AG04449 (cell line): ENCODE measurements at regions of chr7 and their contacts with region 1.

Region 1: GRCh38 chr7:128209229-128210035 is 31.6 kb upstream of the LEP start:
- DNase-seq: no peak
- H3K4me3 ChIP-seq: no peak overlapping the region
- CTCF ChIP-seq: peak; percentile 97

Region 2: GRCh38 chr7:127588019-127588696 is 621.3 kb before region 1 on chr7 and contains the start of gene ARF5:
- CTCF ChIA-PET with region 1: interaction called, 12 read pairs
- POLR2A ChIA-PET with region 1: no interaction called
- DNase-seq: no peak
- H3K4me3 ChIP-seq: peak within 1 kb of the TSS; percentile 94
- CTCF ChIP-seq: no peak

Region 3: DNA sequence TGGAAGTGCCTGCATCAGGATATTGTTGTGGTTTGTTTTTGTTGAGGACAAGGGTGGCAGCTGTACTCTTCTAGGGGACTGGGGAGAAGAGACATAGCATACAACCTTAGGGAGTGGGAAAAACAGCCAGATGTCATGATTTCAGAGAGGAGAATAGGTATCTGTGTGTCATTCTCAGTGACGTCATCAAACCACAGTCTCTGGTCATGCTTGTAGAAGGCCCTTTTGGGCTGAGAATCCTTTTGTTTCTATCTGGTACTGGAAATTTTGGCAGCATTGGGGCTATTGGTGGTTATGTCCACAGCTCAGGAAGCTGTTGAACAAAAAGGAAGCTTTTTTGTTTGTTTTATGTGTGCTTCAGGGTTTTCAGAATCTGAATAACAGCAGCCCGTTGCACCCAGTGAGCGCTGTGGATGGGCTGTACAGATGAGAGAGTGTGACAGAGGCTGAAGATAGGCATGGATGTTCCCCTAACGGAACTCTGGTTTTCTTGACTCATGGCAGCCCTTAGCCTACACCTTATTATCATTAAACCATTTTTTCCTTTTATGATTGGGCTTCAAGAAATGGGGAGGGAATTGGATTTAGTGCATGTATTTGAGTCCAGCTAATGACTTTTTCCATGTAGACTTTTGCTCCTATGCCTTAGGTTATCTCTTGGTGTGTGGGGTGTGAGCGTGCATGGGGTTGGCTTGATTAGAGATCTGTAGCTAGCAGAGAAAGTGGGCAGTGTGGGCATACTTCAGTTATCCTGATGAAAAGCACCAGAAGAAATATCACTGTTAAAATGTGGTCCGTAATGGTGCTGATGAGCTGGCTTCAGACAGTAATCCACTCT is 491.7 kb before region 1 on chr7:
- CTCF ChIA-PET with region 1: interaction called, 223 read pairs
- POLR2A ChIA-PET with region 1: interaction called, 3 read pairs
- DNase-seq: no peak
- H3K4me3 ChIP-seq: no peak overlapping the region
- CTCF ChIP-seq: no peak

Region 4: GRCh38 chr7:128060018-128060417 is 149.4 kb before region 1 on chr7:
- CTCF ChIA-PET with region 1: interaction called, 13 read pairs
- POLR2A ChIA-PET with region 1: no interaction called
- DNase-seq: no peak
- H3K4me3 ChIP-seq: no peak overlapping the region
- CTCF ChIP-seq: no peak

Region 5: DNA sequence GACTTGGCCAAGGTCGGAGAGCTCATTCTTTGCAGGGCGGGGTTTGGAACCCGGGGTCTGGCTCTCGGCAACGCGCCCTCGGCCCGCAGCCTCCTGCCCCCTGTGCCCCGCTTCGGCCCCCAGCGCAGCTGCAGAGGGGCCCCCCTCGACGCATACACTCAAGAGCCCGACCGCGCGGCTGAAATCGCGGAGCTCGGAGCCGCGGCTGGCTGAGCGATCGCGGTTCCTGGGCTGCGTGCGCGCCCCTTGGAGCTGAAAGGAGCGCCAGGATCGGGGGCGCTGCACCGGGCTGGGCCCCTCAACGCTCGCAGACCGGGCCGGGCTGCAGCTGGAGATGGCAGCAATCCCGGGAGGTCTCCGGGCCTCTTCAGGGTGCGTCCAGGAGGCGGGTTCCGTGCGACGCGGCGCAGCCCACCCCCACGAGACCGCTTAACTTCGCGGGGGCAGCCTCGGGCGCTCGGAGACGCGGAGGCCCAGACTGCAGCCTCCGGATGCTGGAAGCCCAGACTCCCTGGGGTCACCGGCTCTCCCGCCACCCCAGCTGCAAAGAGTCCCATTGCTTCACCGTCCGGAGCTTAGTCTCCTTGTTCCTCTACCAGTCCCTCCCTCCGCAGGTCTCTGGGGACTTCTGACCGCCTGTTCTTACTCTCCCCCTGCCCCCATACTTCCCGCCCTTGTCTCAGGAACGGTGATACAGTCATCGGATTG is 105.2 kb before region 1 on chr7:
- CTCF ChIA-PET with region 1: interaction called, 10 read pairs
- POLR2A ChIA-PET with region 1: no interaction called
- DNase-seq: no peak
- H3K4me3 ChIP-seq: peak overlapping the region; percentile 49
- CTCF ChIP-seq: no peak

Region 6: DNA sequence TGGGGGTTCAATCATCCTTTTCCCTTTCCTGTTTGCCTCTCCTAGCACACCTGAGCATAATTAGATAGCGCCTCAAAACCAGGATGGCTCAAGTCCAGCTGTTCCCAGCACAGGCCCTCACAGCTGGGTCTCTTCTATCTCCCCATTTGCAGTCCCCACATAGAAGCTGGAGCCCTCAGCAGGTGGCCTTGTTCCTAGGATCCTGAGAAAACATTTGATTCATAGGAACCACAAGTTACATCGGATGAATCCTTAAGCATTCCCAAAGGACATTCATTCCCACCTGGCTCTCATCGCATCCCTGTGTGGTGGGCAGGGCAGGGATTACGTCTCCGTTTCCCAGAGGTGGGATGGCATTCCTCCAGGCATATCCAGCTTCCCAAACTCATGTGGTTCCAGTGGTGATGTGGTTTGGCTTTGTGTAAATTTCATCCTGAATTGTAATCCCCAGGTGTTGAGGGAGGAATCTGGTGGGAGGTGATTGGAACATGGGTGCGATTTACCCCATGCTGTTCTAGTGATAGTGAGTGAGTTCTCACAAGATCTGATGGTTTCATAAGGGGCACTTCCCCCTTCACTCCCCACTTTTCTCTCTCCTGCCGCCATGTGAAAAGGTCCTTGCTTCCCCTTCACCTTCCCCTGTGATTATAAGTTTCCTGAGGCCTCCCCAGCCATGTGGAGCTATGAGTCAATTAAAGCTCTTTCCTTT is 18.1 kb before region 1 on chr7:
- CTCF ChIA-PET with region 1: interaction called, 15 read pairs
- POLR2A ChIA-PET with region 1: no interaction called
- DNase-seq: no peak
- H3K4me3 ChIP-seq: no peak overlapping the region
- CTCF ChIP-seq: no peak